ENCODE measurements at regions of chr2 and their contacts with region 1.

Region 1: GRCh38 chr2:181715033-181715630 is 34.8 kb upstream of the NEUROD1 start:
- DNase-seq: peak; percentile 40 to 80
- ATAC-seq: peak; percentile 79

Region 2: GRCh38 chr2:180124273-180125139 is 1590.6 kb before region 1 on chr2:
- intact Hi-C with region 1: loop called in 1 of 2 experiments (anchors 5 kb)
- DNase-seq: no peak
- ATAC-seq: peak; percentile 70

Region 3: GRCh38 chr2:181077128-181077709 is 637.9 kb before region 1 on chr2:
- intact Hi-C with region 1: loop called in 1 of 2 experiments (anchors 5 kb)
- DNase-seq: no peak
- ATAC-seq: peak; percentile 73

Region 4: GRCh38 chr2:181573140-181573736 is 141.9 kb before region 1 on chr2:
- intact Hi-C with region 1: loop called in 1 of 2 experiments (anchors 10 kb)
- DNase-seq: no peak
- ATAC-seq: no peak